Naive thymus-derived CD4-positive, alpha-beta T cell (primary cell): ENCODE measurements at regions of chr10 and their contacts with region 1.

Region 1: GRCh38 chr10:28381903-28382347 is 79.1 kb upstream of the MPP7 start:
- DNase-seq: peak; percentile 55 to 82 (median 76)
- ATAC-seq: peak; percentile 98
- H3K4me3 ChIP-seq: no peak overlapping the region
- H3K4me3 Mint-ChIP-seq: peak overlapping the region in 4 of 10 donors; percentile 20 to 72 (median 34)
- H3K27ac ChIP-seq: no peak overlapping the region
- H3K27ac Mint-ChIP-seq: peak overlapping the region; percentile 30 to 93 (median 70)
- H3K4me1 ChIP-seq: peaks cover 0 to 20% of the 10 kb centered on the region in 2 donors
- H3K4me1 Mint-ChIP-seq: peaks cover 17 to 49% (median 43%) of the 10 kb centered on the region in 7 donors
- H3K27me3 ChIP-seq: no peaks in the 10 kb centered on the region
- H3K27me3 Mint-ChIP-seq: peaks cover 0 to 11% (median 0%) of the 10 kb centered on the region in 5 donors

Region 2: DNA sequence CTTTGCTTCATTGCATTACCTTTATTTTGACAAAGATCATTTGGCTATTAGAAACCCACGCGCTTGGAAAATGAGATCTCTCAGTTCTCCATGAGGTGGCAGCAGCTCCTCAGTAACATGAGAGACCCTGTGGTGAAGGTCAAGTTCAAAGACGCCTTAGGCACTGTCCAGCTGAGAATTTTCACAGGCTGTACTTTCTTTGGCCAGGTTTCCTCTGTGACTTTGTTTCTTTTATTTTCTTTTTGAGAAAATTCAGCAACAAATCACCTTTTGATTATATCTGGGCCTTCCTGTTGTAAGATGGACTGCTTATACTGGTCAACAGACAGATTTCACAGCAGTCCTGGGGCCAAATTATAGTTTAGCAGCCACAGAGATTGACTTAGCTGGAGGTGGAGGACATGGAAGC is 823.3 kb before region 1 on chr10:
- CTCF ChIA-PET with region 1: no interaction called
- POLR2A ChIA-PET with region 1: no interaction called
- intact Hi-C with region 1: loop called in 1 of 2 experiments (anchors 5 kb)
- DNase-seq: peak in 3 of 9 donors; percentile 10 to 25 (median 15)
- ATAC-seq: peak; percentile 63
- H3K4me3 ChIP-seq: no peak overlapping the region
- H3K4me3 Mint-ChIP-seq: no peak overlapping the region
- H3K27ac ChIP-seq: no peak overlapping the region
- H3K27ac Mint-ChIP-seq: peak overlapping the region in 1 of 9 donors; percentile 36
- H3K4me1 ChIP-seq: peaks cover 0 to under 1% of the 10 kb centered on the region in 2 donors
- H3K4me1 Mint-ChIP-seq: peaks cover 0 to 4% (median 0%) of the 10 kb centered on the region in 7 donors
- H3K27me3 ChIP-seq: no peaks in the 10 kb centered on the region
- H3K27me3 Mint-ChIP-seq: peaks cover 0 to 16% (median 0%) of the 10 kb centered on the region in 5 donors

Region 3: GRCh38 chr10:28047061-28047460 is 334.9 kb before region 1 on chr10:
- CTCF ChIA-PET with region 1: no interaction called
- POLR2A ChIA-PET with region 1: no interaction called
- intact Hi-C with region 1: no loop called
- DNase-seq: no peak
- ATAC-seq: no peak
- H3K4me3 ChIP-seq: no peak overlapping the region
- H3K4me3 Mint-ChIP-seq: no peak overlapping the region
- H3K27ac ChIP-seq: no peak overlapping the region
- H3K27ac Mint-ChIP-seq: peak overlapping the region in 1 of 9 donors; percentile 4
- H3K4me1 ChIP-seq: no peaks in the 10 kb centered on the region
- H3K4me1 Mint-ChIP-seq: peaks cover 0 to 2% (median 0%) of the 10 kb centered on the region in 7 donors
- H3K27me3 ChIP-seq: no peaks in the 10 kb centered on the region
- H3K27me3 Mint-ChIP-seq: no peaks in the 10 kb centered on the region

Region 4: DNA sequence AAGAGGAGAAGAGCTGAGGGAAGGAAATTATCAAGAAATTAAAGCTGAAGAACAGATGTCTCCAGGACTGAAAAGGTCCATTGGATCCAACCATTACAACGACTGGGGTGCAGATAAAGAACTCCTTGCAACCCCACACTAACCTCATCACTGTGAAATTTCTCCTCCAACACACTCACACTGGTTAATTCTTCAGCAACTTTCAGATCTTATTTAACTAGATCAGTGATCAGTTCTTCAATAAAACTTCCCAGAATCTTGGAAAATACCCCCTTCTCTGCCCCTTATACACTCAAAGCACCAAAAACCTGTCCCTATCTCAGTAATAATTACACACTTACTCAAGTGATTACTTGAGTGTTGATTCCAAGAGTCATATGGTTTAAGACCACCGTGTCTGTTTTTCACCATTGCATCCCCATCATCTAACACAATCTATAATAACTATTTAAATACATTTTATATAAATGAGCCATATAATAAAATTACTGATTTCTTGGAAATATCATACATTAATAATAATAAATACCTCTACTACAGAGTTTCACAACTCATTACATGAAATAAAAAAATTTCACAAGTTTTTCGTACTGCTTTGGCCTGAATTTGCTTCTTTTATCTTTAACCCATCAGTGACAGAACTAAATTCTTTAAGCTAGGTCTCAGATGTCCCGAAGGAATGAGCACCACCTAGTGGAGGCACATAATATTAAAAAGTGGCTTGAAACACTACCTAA is 202.8 kb before region 1 on chr10:
- CTCF ChIA-PET with region 1: interaction called, 3 read pairs
- POLR2A ChIA-PET with region 1: interaction called, 3 read pairs
- intact Hi-C with region 1: loop called (anchors 1 to 2 kb)
- DNase-seq: peak in 7 of 9 donors; percentile 18 to 63 (median 49)
- ATAC-seq: peak; percentile 86
- H3K4me3 ChIP-seq: peak overlapping the region; percentile 55
- H3K4me3 Mint-ChIP-seq: peak overlapping the region; percentile 0 to 98 (median 87)
- H3K27ac ChIP-seq: peak overlapping the region; percentile 54
- H3K27ac Mint-ChIP-seq: peak overlapping the region; percentile 77 to 98 (median 92)
- H3K4me1 ChIP-seq: peaks cover 10 to 12% of the 10 kb centered on the region in 2 donors
- H3K4me1 Mint-ChIP-seq: peaks cover 17 to 70% (median 55%) of the 10 kb centered on the region in 7 donors
- H3K27me3 ChIP-seq: no peaks in the 10 kb centered on the region
- H3K27me3 Mint-ChIP-seq: peaks cover 0 to 9% (median 0%) of the 10 kb centered on the region in 5 donors

Region 5: GRCh38 chr10:28302638-28303488 is 79.1 kb before region 1 on chr10 and contains the start of gene MPP7:
- CTCF ChIA-PET with region 1: interaction called, 210 read pairs
- POLR2A ChIA-PET with region 1: interaction called, 88 read pairs
- intact Hi-C with region 1: loop called (anchors 1 kb)
- DNase-seq: peak; percentile 96 to 98 (median 97)
- ATAC-seq: peak; percentile 97
- H3K4me3 ChIP-seq: peak within 1 kb of the TSS; percentile 92
- H3K4me3 Mint-ChIP-seq: peak within 1 kb of the TSS; percentile 85 to 99 (median 93)
- H3K27ac ChIP-seq: peak within 1 kb of the TSS; percentile 86
- H3K27ac Mint-ChIP-seq: peak within 1 kb of the TSS; percentile 67 to 98 (median 94)
- H3K4me1 ChIP-seq: peaks cover 8 to 42% of the 10 kb centered on the region in 2 donors
- H3K4me1 Mint-ChIP-seq: peaks cover 27 to 80% (median 67%) of the 10 kb centered on the region in 7 donors
- H3K27me3 ChIP-seq: no peaks in the 10 kb centered on the region
- H3K27me3 Mint-ChIP-seq: peaks cover 0 to 51% (median 0%) of the 10 kb centered on the region in 5 donors
- total RNA-seq, gene MPP7: 9.7 to 44.7 (median 36.1) TPM

Region 6: GRCh38 chr10:28326516-28327490 is 55.1 kb before region 1 on chr10:
- CTCF ChIA-PET with region 1: interaction called, 63 read pairs
- POLR2A ChIA-PET with region 1: interaction called, 10 read pairs
- intact Hi-C with region 1: no loop called
- DNase-seq: no peak
- ATAC-seq: no peak
- H3K4me3 ChIP-seq: no peak overlapping the region
- H3K4me3 Mint-ChIP-seq: peak overlapping the region in 9 of 10 donors; percentile 26 to 67 (median 50)
- H3K27ac ChIP-seq: no peak overlapping the region
- H3K27ac Mint-ChIP-seq: peak overlapping the region in 7 of 9 donors; percentile 3 to 79 (median 41)
- H3K4me1 ChIP-seq: peaks cover 24 to 34% of the 10 kb centered on the region in 2 donors
- H3K4me1 Mint-ChIP-seq: peaks cover 20 to 79% (median 66%) of the 10 kb centered on the region in 7 donors
- H3K27me3 ChIP-seq: no peaks in the 10 kb centered on the region
- H3K27me3 Mint-ChIP-seq: no peaks in the 10 kb centered on the region

Region 7: GRCh38 chr10:28393966-28394568 is 12.1 kb after region 1 on chr10:
- CTCF ChIA-PET with region 1: interaction called, 38 read pairs
- POLR2A ChIA-PET with region 1: interaction called, 4 read pairs
- intact Hi-C with region 1: no loop called
- DNase-seq: peak; percentile 36 to 70 (median 53)
- ATAC-seq: peak; percentile 87
- H3K4me3 ChIP-seq: no peak overlapping the region
- H3K4me3 Mint-ChIP-seq: no peak overlapping the region
- H3K27ac ChIP-seq: no peak overlapping the region
- H3K27ac Mint-ChIP-seq: peak overlapping the region in 2 of 9 donors; percentile 12 to 35
- H3K4me1 ChIP-seq: no peaks in the 10 kb centered on the region
- H3K4me1 Mint-ChIP-seq: peaks cover 0 to 6% (median 5%) of the 10 kb centered on the region in 7 donors
- H3K27me3 ChIP-seq: no peaks in the 10 kb centered on the region
- H3K27me3 Mint-ChIP-seq: peaks cover 0 to 6% (median 0%) of the 10 kb centered on the region in 5 donors

Region 8: DNA sequence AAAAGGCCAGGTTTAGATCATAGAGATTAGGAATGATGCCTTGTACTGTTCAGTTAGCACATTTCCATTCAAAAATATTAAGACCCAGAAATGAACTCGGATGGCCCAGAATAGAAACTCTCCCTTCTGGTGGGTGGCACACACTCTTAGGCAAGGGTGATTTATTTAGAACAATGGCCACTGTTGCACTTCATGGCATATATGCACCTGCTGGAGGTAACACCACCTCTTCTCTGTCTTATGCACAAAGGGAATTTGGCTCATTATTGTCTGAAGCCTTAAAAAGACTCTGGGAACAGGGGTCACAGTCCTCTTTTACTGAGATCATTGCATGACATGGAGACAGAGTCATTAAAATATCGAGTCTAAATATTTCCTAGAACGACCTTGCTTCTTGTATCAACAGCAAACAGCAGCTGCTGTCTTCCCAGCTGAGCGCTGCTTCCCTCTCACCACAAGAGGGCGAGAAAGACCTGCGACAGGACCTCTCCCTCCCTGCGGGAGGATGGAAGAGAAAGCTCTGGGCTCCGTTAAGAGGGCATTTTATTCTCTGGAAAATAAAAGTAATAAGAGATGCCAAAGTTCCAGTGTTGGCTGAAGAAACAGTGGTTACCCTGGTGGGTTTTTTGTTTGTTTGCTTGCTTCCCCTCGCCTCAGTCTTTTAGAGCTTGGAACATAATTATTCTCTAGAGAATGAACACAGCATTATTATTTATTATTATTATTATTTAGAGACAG is 281.8 kb after region 1 on chr10:
- CTCF ChIA-PET with region 1: no interaction called
- POLR2A ChIA-PET with region 1: no interaction called
- intact Hi-C with region 1: no loop called
- DNase-seq: peak; percentile 33 to 67 (median 58)
- ATAC-seq: peak; percentile 89
- H3K4me3 ChIP-seq: no peak overlapping the region
- H3K4me3 Mint-ChIP-seq: no peak overlapping the region
- H3K27ac ChIP-seq: no peak overlapping the region
- H3K27ac Mint-ChIP-seq: no peak overlapping the region
- H3K4me1 ChIP-seq: peaks cover 0 to 4% of the 10 kb centered on the region in 2 donors
- H3K4me1 Mint-ChIP-seq: peaks cover 5 to 11% (median 7%) of the 10 kb centered on the region in 7 donors
- H3K27me3 ChIP-seq: peaks cover 0 to 8% of the 10 kb centered on the region in 2 donors
- H3K27me3 Mint-ChIP-seq: peaks cover 45 to 50% (median 49%) of the 10 kb centered on the region in 5 donors